HepG2 (cell line): ENCODE measurements at regions of chr15 and their contacts with region 1.

Region 1: DNA sequence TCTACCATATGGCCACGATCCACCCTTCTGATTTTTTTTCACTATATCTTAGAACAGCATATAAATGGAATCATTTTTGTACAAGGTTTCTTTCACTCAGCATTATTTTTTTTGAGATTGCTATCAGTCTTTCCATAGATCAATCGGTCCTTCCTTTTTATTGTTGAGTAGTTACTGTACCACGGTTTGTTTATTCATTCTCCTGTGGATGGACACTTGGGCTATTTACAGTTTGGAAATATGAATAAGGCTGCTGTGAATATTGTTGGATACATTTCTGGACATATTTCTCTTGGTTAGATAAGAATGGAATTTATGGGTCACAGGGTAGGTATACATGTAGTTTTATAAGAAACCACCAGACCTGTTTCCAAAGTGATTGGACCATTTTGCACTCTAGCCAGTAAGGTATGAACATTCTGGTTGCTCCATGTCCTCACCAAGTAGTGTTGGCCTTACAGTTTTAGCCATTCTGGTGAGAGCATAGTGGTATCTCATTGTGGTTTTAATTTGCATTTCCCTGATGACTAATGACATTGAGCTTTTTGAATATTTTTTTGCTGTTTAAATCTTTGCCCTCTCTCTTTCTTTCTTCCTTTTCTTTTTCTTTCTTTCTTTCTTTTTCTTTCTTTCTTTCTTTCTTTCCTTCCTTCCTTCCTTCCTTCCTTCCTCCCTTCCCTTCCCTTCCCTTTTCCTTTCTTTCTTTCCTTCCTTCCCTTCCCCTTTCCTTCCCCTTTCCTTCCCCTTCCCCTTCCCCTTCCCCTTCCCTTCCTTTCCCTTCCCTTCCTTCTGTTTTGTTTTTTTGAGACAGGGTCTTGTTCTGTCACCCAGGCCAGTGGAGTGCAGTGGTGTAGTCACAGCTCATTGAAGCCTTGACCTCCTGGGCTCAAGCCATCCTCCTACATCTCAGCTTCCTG is 49.2 kb downstream of the LRRK1 start:
- DNase-seq: no peak
- ATAC-seq: no peak
- H3K4me3 ChIP-seq: no peak overlapping the region
- H3K27ac ChIP-seq: no peak overlapping the region
- H3K4me1 ChIP-seq: no peaks in the 10 kb centered on the region
- H3K27me3 ChIP-seq: peaks cover 7 to 33% of the 10 kb centered on the region in 2 experiments
- CTCF ChIP-seq: no peak
- EP300 ChIP-seq: no peak
- POLR2A ChIP-seq: no peak
- RAD21 ChIP-seq: no peak

Region 2: GRCh38 chr15:100635406-100636071 is 332.8 kb before region 1 on chr15:
- CTCF ChIA-PET with region 1: no interaction called
- POLR2A ChIA-PET with region 1: no interaction called
- in situ Hi-C with region 1: no loop called
- intact Hi-C with region 1: no loop called
- DNase-seq: no peak
- ATAC-seq: no peak
- H3K4me3 ChIP-seq: no peak overlapping the region
- H3K27ac ChIP-seq: no peak overlapping the region
- H3K4me1 ChIP-seq: peaks cover 41% of the 10 kb centered on the region
- H3K27me3 ChIP-seq: no peaks in the 10 kb centered on the region
- CTCF ChIP-seq: no peak
- EP300 ChIP-seq: no peak
- POLR2A ChIP-seq: no peak
- RAD21 ChIP-seq: no peak

Region 3: DNA sequence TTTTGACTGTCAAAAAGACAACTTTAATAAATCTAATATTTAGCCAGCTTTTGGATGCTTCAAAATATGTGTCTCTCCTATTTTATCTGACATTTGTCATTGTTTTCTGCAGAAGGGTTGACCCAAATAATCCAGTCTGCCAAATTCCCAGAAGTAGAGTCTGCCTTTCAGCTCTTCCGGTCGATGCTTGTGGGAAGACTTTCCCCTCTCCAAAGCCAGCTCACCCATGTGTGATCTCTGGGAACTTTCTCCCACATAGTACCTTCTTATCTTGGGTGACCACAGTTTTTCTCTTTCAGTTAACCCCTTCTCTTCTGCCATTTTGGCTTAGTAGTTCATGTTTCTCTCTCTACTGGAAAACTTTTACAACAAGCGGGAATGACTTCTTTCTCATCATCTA is 271.9 kb before region 1 on chr15:
- CTCF ChIA-PET with region 1: no interaction called
- POLR2A ChIA-PET with region 1: no interaction called
- in situ Hi-C with region 1: no loop called
- intact Hi-C with region 1: loop called (anchors 2 kb)
- DNase-seq: no peak
- ATAC-seq: no peak
- H3K4me3 ChIP-seq: no peak overlapping the region
- H3K27ac ChIP-seq: no peak overlapping the region
- H3K4me1 ChIP-seq: no peaks in the 10 kb centered on the region
- H3K27me3 ChIP-seq: peaks cover 0 to 4% of the 10 kb centered on the region in 2 experiments; a peak in 1 of 5 replicates
- CTCF ChIP-seq: no peak
- EP300 ChIP-seq: no peak
- POLR2A ChIP-seq: no peak
- RAD21 ChIP-seq: no peak

Region 4: DNA sequence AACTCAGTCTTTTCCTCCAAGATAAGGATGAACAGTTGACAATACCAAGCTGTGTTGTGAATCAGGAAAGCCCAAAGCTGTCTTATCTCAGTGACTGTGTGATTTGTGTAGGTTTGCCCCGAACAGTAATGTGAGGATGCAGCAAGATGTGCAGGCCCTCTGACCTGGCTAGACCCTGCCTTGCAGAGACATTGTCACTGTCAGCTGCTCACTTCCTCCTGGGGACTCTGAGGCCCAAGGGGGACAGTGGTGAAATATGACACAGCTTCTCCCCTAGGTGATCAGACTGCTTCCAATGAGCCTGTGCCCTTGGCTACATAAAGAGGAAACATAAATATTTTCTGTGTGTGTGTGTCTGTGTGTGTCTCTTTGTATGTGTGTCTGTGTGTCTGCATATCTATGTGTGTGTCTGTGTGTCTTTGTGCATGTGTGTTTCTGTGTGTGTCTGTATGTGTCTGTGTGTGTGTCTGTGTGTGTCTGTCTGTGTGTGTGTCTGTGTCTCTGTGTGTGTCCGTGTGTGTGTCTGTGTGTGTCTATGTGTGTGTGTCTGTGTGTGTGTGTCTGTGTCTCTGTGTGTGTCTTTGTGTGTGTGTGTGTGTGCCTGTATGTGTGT is 27.4 kb before region 1 on chr15:
- CTCF ChIA-PET with region 1: no interaction called
- POLR2A ChIA-PET with region 1: no interaction called
- in situ Hi-C with region 1: no loop called
- intact Hi-C with region 1: no loop called
- DNase-seq: no peak
- ATAC-seq: no peak
- H3K4me3 ChIP-seq: no peak overlapping the region
- H3K27ac ChIP-seq: no peak overlapping the region
- H3K4me1 ChIP-seq: no peaks in the 10 kb centered on the region
- H3K27me3 ChIP-seq: peaks cover 1 to 50% of the 10 kb centered on the region in 2 experiments; a peak in 4 of 5 replicates
- CTCF ChIP-seq: no peak
- EP300 ChIP-seq: no peak
- POLR2A ChIP-seq: no peak
- RAD21 ChIP-seq: no peak

Region 5: GRCh38 chr15:100951965-100952364 is 16.3 kb before region 1 on chr15:
- CTCF ChIA-PET with region 1: no interaction called
- POLR2A ChIA-PET with region 1: no interaction called
- in situ Hi-C with region 1: no loop called
- intact Hi-C with region 1: no loop called
- DNase-seq: no peak
- ATAC-seq: no peak
- H3K4me3 ChIP-seq: no peak overlapping the region
- H3K27ac ChIP-seq: no peak overlapping the region
- H3K4me1 ChIP-seq: no peaks in the 10 kb centered on the region
- H3K27me3 ChIP-seq: peaks cover 0 to 14% of the 10 kb centered on the region in 2 experiments; a peak in 1 of 5 replicates
- CTCF ChIP-seq: no peak
- EP300 ChIP-seq: no peak
- POLR2A ChIP-seq: no peak
- RAD21 ChIP-seq: no peak

Region 6: GRCh38 chr15:101152914-101153313 is 184.6 kb after region 1 on chr15:
- CTCF ChIA-PET with region 1: no interaction called
- POLR2A ChIA-PET with region 1: no interaction called
- in situ Hi-C with region 1: no loop called
- intact Hi-C with region 1: no loop called
- DNase-seq: peak; percentile 28
- ATAC-seq: peak; percentile 90
- H3K4me3 ChIP-seq: no peak overlapping the region; a peak in 1 of 6 replicates
- H3K27ac ChIP-seq: no peak overlapping the region
- H3K4me1 ChIP-seq: peaks cover 18% of the 10 kb centered on the region
- H3K27me3 ChIP-seq: peaks cover 2 to 4% of the 10 kb centered on the region in 2 experiments; a peak in 3 of 5 replicates
- CTCF ChIP-seq: peak; percentile 73
- EP300 ChIP-seq: no peak
- POLR2A ChIP-seq: no peak
- RAD21 ChIP-seq: 0 out of 2 replicates have a peak, but pooled peaks have one; percentile 14